ENCODE measurements at regions of chr16 and their contacts with region 1.

Region 1: GRCh38 chr16:31032736-31033708 is at the start of gene STX4:
- DNase-seq: peak; percentile 93 to 100 (median 96)
- ATAC-seq: peak; percentile 81
- H3K4me3 ChIP-seq: peak within 1 kb of the TSS; percentile 95
- H3K4me3 Mint-ChIP-seq: peak within 1 kb of the TSS; percentile 97
- H3K27ac ChIP-seq: peak within 1 kb of the TSS; percentile 93 to 96
- H3K27ac Mint-ChIP-seq: peak within 1 kb of the TSS; percentile 83
- H3K4me1 ChIP-seq: peaks cover 26% of the 10 kb centered on the region
- H3K4me1 Mint-ChIP-seq: peaks cover 27% of the 10 kb centered on the region
- H3K27me3 ChIP-seq: no peaks in the 10 kb centered on the region
- H3K27me3 Mint-ChIP-seq: no peaks in the 10 kb centered on the region
- CTCF ChIP-seq: no peak
- total RNA-seq, gene STX4: 54.1 to 55.2 TPM

Region 2: GRCh38 chr16:29641561-29641960 is 1391.5 kb before region 1 on chr16:
- CTCF ChIA-PET with region 1: no interaction called
- POLR2A ChIA-PET with region 1: no interaction called
- intact Hi-C with region 1: no loop called
- DNase-seq: peak in 3 of 14 experiments; percentile 55 to 63 (median 61)
- ATAC-seq: peak; percentile 76
- H3K4me3 ChIP-seq: no peak overlapping the region
- H3K4me3 Mint-ChIP-seq: peak overlapping the region; percentile 15
- H3K27ac ChIP-seq: no peak overlapping the region
- H3K27ac Mint-ChIP-seq: peak overlapping the region; percentile 44
- H3K4me1 ChIP-seq: peaks cover 20% of the 10 kb centered on the region
- H3K4me1 Mint-ChIP-seq: peaks cover 22% of the 10 kb centered on the region
- H3K27me3 ChIP-seq: no peaks in the 10 kb centered on the region
- H3K27me3 Mint-ChIP-seq: no peaks in the 10 kb centered on the region
- CTCF ChIP-seq: no peak

Region 3: GRCh38 chr16:30957456-30958174 is 75.4 kb before region 1 on chr16 and contains the start of gene SETD1A:
- CTCF ChIA-PET with region 1: no interaction called
- POLR2A ChIA-PET with region 1: no interaction called
- intact Hi-C with region 1: loop called in 1 of 2 experiments (anchors 2 kb)
- DNase-seq: peak; percentile 94 to 99 (median 97)
- ATAC-seq: peak; percentile 86
- H3K4me3 ChIP-seq: peak within 1 kb of the TSS; percentile 82
- H3K4me3 Mint-ChIP-seq: peak within 1 kb of the TSS; percentile 97
- H3K27ac ChIP-seq: peak within 1 kb of the TSS; percentile 95
- H3K27ac Mint-ChIP-seq: peak within 1 kb of the TSS; percentile 97
- H3K4me1 ChIP-seq: peaks cover 37% of the 10 kb centered on the region
- H3K4me1 Mint-ChIP-seq: peaks cover 39% of the 10 kb centered on the region
- H3K27me3 ChIP-seq: no peaks in the 10 kb centered on the region
- H3K27me3 Mint-ChIP-seq: no peaks in the 10 kb centered on the region
- CTCF ChIP-seq: no peak
- total RNA-seq, gene SETD1A: 40.1 to 41.2 TPM

Region 4: GRCh38 chr16:30997000-30997886 is 35.8 kb before region 1 on chr16:
- CTCF ChIA-PET with region 1: no interaction called
- POLR2A ChIA-PET with region 1: interaction called, 3 read pairs
- intact Hi-C with region 1: loop called in 1 of 2 experiments (anchors 2 kb)
- DNase-seq: peak; percentile 71 to 89 (median 78)
- ATAC-seq: peak; percentile 99
- H3K4me3 ChIP-seq: peak overlapping the region; percentile 58
- H3K4me3 Mint-ChIP-seq: peak overlapping the region; percentile 83
- H3K27ac ChIP-seq: no peak overlapping the region
- H3K27ac Mint-ChIP-seq: peak overlapping the region; percentile 39
- H3K4me1 ChIP-seq: peaks cover 13% of the 10 kb centered on the region
- H3K4me1 Mint-ChIP-seq: peaks cover 3% of the 10 kb centered on the region
- H3K27me3 ChIP-seq: no peaks in the 10 kb centered on the region
- H3K27me3 Mint-ChIP-seq: no peaks in the 10 kb centered on the region
- CTCF ChIP-seq: no peak

Region 5: GRCh38 chr16:31094424-31095120 is 61.5 kb after region 1 on chr16 and contains the start of gene VKORC1:
- CTCF ChIA-PET with region 1: interaction called, 3 read pairs
- POLR2A ChIA-PET with region 1: interaction called, 3 read pairs
- intact Hi-C with region 1: loop called in 1 of 2 experiments (anchors 1 kb)
- DNase-seq: peak; percentile 75 to 95 (median 82)
- ATAC-seq: peak; percentile 90
- H3K4me3 ChIP-seq: peak within 1 kb of the TSS; percentile 82
- H3K4me3 Mint-ChIP-seq: peak within 1 kb of the TSS; percentile 93
- H3K27ac ChIP-seq: peak within 1 kb of the TSS; percentile 84
- H3K27ac Mint-ChIP-seq: peak within 1 kb of the TSS; percentile 83
- H3K4me1 ChIP-seq: peaks cover 31% of the 10 kb centered on the region
- H3K4me1 Mint-ChIP-seq: peaks cover 34% of the 10 kb centered on the region
- H3K27me3 ChIP-seq: no peaks in the 10 kb centered on the region
- H3K27me3 Mint-ChIP-seq: no peaks in the 10 kb centered on the region
- CTCF ChIP-seq: no peak
- total RNA-seq, gene VKORC1: 19.0 to 19.2 TPM